ENCODE measurements at regions of chr15 and their contacts with region 1.

Region 1: GRCh38 chr15:85044251-85044853 is 62.7 kb downstream of the PDE8A start:
- DNase-seq: peak; percentile 42 to 89
- ATAC-seq: peak; percentile 52 to 65; a peak in 4 of 6 replicates
- H3K4me3 ChIP-seq: no peak overlapping the region
- H3K27ac ChIP-seq: peak overlapping the region; percentile 90 to 95
- H3K4me1 ChIP-seq: peaks cover 81% of the 10 kb centered on the region
- CTCF ChIP-seq: peak; percentile 88
- EP300 ChIP-seq: no peak
- POLR2A ChIP-seq: no peak
- RAD21 ChIP-seq: peak; percentile 90

Region 2: GRCh38 chr15:84773716-84774115 is 270.6 kb before region 1 on chr15:
- CTCF ChIA-PET with region 1: no interaction called
- POLR2A ChIA-PET with region 1: no interaction called
- DNase-seq: no peak
- ATAC-seq: no peak
- H3K4me3 ChIP-seq: no peak overlapping the region
- H3K27ac ChIP-seq: no peak overlapping the region
- H3K4me1 ChIP-seq: no peaks in the 10 kb centered on the region
- CTCF ChIP-seq: no peak
- EP300 ChIP-seq: no peak
- POLR2A ChIP-seq: no peak
- RAD21 ChIP-seq: no peak

Region 3: GRCh38 chr15:84924074-84924731 is 120.1 kb before region 1 on chr15:
- CTCF ChIA-PET with region 1: interaction called, 11 read pairs
- POLR2A ChIA-PET with region 1: interaction called, 4 read pairs
- DNase-seq: no peak
- ATAC-seq: no peak
- H3K4me3 ChIP-seq: no peak overlapping the region
- H3K27ac ChIP-seq: peak overlapping the region; percentile 45 to 78
- H3K4me1 ChIP-seq: peaks cover 47% of the 10 kb centered on the region
- CTCF ChIP-seq: no peak
- EP300 ChIP-seq: no peak
- POLR2A ChIP-seq: no peak
- RAD21 ChIP-seq: no peak

Region 4: GRCh38 chr15:84955089-84955848 is 89.1 kb before region 1 on chr15:
- CTCF ChIA-PET with region 1: interaction called, 132 read pairs
- POLR2A ChIA-PET with region 1: interaction called, 7 read pairs
- DNase-seq: peak; percentile 89 to 92
- ATAC-seq: peak; percentile 99
- H3K4me3 ChIP-seq: peak overlapping the region; percentile 34
- H3K27ac ChIP-seq: peak overlapping the region; percentile 87 to 90
- H3K4me1 ChIP-seq: peaks cover 13% of the 10 kb centered on the region
- CTCF ChIP-seq: peak; percentile 90
- EP300 ChIP-seq: no peak
- POLR2A ChIP-seq: no peak
- RAD21 ChIP-seq: peak; percentile 95

Region 5: GRCh38 chr15:84973492-84974460 is 70.6 kb before region 1 on chr15:
- CTCF ChIA-PET with region 1: interaction called, 80 read pairs
- POLR2A ChIA-PET with region 1: no interaction called
- DNase-seq: no peak
- ATAC-seq: no peak
- H3K4me3 ChIP-seq: no peak overlapping the region
- H3K27ac ChIP-seq: no peak overlapping the region
- H3K4me1 ChIP-seq: no peaks in the 10 kb centered on the region; the same call in 2 of the 3 replicates
- CTCF ChIP-seq: no peak
- EP300 ChIP-seq: no peak
- POLR2A ChIP-seq: no peak
- RAD21 ChIP-seq: no peak

Region 6: GRCh38 chr15:84992157-84992944 is 52.0 kb before region 1 on chr15:
- CTCF ChIA-PET with region 1: interaction called, 15 read pairs
- POLR2A ChIA-PET with region 1: no interaction called
- DNase-seq: peak; percentile 76 to 80
- ATAC-seq: peak; percentile 93 to 96
- H3K4me3 ChIP-seq: no peak overlapping the region
- H3K27ac ChIP-seq: peak overlapping the region; percentile 33 to 65; a peak in 5 of 6 replicates
- H3K4me1 ChIP-seq: peaks cover 64% of the 10 kb centered on the region
- CTCF ChIP-seq: no peak
- EP300 ChIP-seq: no peak
- POLR2A ChIP-seq: no peak
- RAD21 ChIP-seq: no peak

Region 7: GRCh38 chr15:85030301-85031049 is 13.9 kb before region 1 on chr15:
- CTCF ChIA-PET with region 1: interaction called, 77 read pairs
- POLR2A ChIA-PET with region 1: no interaction called
- DNase-seq: no peak
- ATAC-seq: peak; percentile 40 to 47; a peak in 3 of 6 replicates
- H3K4me3 ChIP-seq: no peak overlapping the region
- H3K27ac ChIP-seq: peak overlapping the region; percentile 54 to 57; a peak in 5 of 6 replicates
- H3K4me1 ChIP-seq: peaks cover 95% of the 10 kb centered on the region
- CTCF ChIP-seq: no peak
- EP300 ChIP-seq: no peak
- POLR2A ChIP-seq: no peak
- RAD21 ChIP-seq: no peak

Region 8: GRCh38 chr15:85080329-85080728 is 36.0 kb after region 1 on chr15:
- CTCF ChIA-PET with region 1: interaction called, 18 read pairs
- POLR2A ChIA-PET with region 1: interaction called, 3 read pairs
- DNase-seq: peak in 1 of 2 experiments; percentile 28
- ATAC-seq: no peak; a peak in 1 of 6 replicates
- H3K4me3 ChIP-seq: no peak overlapping the region
- H3K27ac ChIP-seq: peak overlapping the region in 1 of 2 experiments; percentile 22; a peak in 1 of 6 replicates
- H3K4me1 ChIP-seq: peaks cover 16% of the 10 kb centered on the region
- CTCF ChIP-seq: no peak
- EP300 ChIP-seq: 0 out of 5 replicates have a peak, but pooled peaks of 1 of the 2 experiments have one; percentile 11
- POLR2A ChIP-seq: no peak
- RAD21 ChIP-seq: no peak